Right ventricle myocardium inferior (tissue), 1 donor: ENCODE measurements at regions of chr7 and their contacts with region 1.

Region 1: GRCh38 chr7:101287032-101287431 is 34.6 kb downstream of the IFT22 start:
- DNase-seq: no peak
- ATAC-seq: no peak

Region 2: DNA sequence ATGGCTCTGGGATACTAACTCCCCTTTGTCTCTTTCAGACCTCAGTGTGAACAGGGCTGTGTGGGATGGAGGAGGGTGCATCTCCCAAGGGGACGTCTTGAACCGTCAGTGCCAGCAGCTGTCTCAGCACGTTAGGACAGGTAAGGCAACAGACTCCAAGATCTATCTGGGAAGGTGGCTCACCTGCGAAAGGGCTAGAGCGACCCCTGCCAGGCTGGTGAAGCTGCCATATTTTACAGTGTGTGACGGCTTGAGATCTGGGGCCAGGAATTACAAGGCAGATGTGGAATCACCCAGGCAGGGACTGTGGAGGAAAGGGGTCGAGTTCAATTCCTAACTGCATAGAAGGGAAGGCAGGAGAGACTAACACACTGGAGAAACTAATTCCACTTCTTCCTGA is 255.9 kb before region 1 on chr7:
- intact Hi-C with region 1: no loop called
- DNase-seq: no peak
- ATAC-seq: no peak

Region 3: DNA sequence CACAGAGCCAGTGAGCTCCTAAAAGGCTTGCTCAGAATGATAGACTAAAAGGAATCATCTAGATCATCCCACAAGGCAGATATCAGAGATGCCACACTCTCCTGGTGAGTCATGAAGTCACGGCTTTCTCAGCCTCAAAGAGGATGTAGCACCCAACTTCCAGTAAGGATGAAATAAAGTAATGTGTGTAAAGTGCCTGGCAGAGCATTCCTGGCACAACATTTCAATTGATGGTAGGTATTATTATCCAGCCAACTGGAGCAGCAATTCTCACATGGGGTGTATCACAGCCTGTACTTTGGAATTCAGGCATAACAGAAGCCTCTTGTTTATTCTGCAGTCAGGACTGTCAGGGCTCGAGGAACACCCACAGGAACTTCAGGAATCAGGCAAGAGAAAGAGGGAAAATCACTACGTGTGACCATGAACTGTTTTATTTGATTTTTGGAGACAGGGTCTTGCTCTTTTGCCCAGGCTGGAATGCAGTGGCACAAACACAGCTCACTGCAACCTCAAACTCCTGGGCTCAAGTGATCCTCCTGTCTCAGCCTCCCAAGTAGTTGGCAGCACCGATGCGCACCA is 101.7 kb before region 1 on chr7:
- intact Hi-C with region 1: loop called (anchors 5 kb)
- DNase-seq: no peak
- ATAC-seq: no peak